Transverse colon (tissue), 4 donors: ENCODE measurements at regions of chr16 and their contacts with region 1.

Region 1: DNA sequence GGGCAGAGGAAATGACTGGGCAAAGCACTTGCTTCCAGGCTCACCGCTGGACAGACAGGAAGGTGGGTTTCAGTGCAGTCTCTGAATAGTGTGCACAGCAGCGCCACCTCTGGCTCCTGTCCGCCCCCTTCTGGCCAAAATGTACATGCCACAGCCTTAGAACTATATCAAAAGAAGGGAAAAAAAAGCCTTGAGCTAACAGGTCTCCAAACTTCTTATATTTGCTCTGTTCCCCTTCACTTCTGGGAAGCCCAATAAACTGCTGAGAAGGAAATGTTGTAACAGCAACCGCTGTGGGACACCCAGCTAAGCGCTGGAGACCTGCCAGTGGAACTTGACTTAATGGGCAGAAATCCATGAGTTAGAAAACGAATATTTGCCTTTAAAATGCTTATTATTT is 17.5 kb downstream of the COG7 start:
- DNase-seq: peak; percentile 73
- H3K4me3 ChIP-seq: no peak overlapping the region
- H3K27ac ChIP-seq: no peak overlapping the region
- H3K4me1 ChIP-seq: peaks cover 6 to 26% (median 17%) of the 10 kb centered on the region in 4 donors
- H3K27me3 ChIP-seq: no peaks in the 10 kb centered on the region
- CTCF ChIP-seq: peak; percentile 78 to 88 (median 86)
- EP300 ChIP-seq: no peak
- POLR2A ChIP-seq: no peak

Region 2: DNA sequence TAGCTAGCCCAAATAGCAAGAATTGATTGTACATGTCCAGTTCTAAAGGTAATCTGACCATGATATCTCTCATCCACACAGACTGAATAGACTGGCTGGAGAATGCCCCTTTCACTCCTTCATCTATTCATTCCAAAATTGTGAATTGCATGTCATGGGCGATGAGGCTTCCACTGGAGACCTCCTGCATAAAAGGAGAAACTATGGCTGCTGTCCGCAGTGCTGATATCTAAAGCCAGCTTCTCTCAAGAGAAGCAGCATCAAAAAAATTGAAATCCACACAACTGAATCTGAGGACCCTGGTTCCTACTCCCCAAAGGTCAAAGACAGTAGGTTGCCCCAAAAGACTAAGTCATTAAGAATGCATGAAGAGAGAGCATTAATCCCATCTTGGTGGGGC is 260.9 kb before region 1 on chr16:
- in situ Hi-C with region 1: loop called in 1 of 4 experiments (anchors 10 kb)
- intact Hi-C with region 1: no loop called
- DNase-seq: no peak
- H3K4me3 ChIP-seq: no peak overlapping the region
- H3K27ac ChIP-seq: no peak overlapping the region
- H3K4me1 ChIP-seq: no peaks in the 10 kb centered on the region
- H3K27me3 ChIP-seq: peaks cover 38% of the 10 kb centered on the region
- CTCF ChIP-seq: no peak
- EP300 ChIP-seq: no peak
- POLR2A ChIP-seq: no peak

Region 3: DNA sequence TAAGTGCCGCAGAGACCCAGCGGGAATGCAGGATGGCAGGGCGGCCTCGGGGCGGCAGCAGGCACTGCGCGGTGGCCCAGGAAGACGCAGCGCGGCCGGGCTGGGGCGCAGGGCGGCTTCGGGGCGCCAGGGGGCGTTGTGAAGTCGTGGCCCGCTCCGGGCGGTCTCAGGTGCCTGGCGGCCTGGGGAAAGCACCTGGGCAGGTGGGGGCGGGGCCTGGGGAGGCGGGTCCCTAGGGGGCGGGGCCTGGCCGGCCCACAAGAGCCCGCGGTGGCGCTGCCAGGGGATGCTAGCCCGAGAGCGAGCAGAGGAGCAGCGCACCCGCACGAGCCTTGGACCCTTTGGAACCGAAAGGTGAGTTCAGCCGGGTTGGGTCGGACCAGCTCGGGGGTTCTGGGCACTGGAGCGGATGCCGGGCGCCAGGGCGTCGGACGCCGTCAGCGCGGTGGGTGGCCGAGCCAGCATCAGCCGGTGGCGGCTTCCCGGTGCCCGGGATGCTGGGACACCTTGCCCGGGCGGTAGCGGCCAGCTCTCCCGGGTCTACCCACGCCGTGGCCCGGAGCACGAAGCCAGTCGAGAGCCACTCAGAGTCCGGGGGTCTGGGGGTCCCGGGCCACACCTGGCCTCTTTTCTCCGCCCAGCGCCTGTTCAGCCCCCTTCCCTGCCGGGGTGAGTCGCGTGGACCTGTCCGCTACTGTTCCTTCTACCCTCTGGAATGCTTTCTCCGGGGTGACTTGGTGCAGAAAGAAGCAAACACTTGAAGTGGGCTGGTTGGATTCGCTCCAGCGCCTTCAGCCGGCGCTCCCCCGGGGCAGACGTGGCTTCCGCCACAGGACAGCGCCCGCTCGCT is 252.8 kb before region 1 on chr16 and contains the start of gene SCNN1G:
- in situ Hi-C with region 1: loop called (anchors 5 to 10 kb)
- intact Hi-C with region 1: loop called (anchors 1 kb)
- DNase-seq: peak; percentile 93
- H3K4me3 ChIP-seq: peak within 1 kb of the TSS; percentile 33 to 61 (median 46)
- H3K27ac ChIP-seq: peak within 1 kb of the TSS in 2 of 4 donors; percentile 20 to 32
- H3K4me1 ChIP-seq: peaks cover 9 to 16% (median 12%) of the 10 kb centered on the region in 4 donors
- H3K27me3 ChIP-seq: peaks cover 79% of the 10 kb centered on the region
- CTCF ChIP-seq: peak; percentile 84 to 99 (median 96)
- EP300 ChIP-seq: no peak
- POLR2A ChIP-seq: peak; percentile 38
- total RNA-seq, gene SCNN1G: 2.8 to 87.8 (median 66.2) TPM

Region 4: DNA sequence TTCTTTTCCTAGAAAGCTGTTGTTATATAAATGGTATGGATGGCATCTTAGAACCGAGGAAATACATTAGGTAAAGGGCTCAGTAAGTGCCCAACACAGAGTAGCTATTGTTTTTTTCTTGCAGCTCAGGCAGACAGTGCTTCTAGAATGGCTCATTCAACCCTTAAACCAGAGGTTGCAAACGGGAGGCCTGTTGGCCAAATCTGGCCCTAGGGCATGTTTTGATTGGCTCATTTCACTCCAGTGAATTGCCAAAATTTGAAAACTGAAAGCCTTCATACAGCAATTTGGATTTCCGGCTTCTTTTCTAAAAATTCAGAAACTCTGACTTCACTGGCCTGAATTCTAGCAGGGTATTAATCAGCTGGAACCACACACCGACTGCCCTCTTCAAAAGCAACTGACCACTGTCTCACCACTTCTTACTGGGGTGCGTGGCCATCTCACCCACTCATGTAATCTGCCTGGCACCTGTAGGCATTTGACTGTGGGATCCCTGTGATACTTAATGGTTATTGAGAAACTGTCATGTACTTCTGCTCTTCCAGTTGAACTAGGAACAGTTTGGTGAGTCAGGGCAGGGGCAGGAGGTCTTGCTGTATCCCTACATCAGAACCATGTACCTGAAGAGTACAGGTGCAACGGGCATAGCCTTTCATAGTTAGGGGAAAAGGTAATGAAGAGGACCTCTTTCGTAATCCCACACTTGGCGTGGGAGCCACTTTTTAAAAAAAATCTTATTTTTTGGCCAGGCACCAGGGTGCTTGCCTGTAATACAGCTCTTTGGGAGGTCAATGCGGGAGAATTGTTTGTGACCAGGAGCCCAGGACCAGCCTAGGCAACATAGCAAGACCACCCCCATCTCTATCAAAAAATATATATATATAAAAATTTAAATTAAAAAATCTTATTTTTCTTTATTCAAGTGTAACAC is 187.0 kb before region 1 on chr16:
- in situ Hi-C with region 1: no loop called
- intact Hi-C with region 1: no loop called
- DNase-seq: no peak
- H3K4me3 ChIP-seq: no peak overlapping the region
- H3K27ac ChIP-seq: no peak overlapping the region
- H3K4me1 ChIP-seq: no peaks in the 10 kb centered on the region
- H3K27me3 ChIP-seq: no peaks in the 10 kb centered on the region
- CTCF ChIP-seq: no peak
- EP300 ChIP-seq: no peak
- POLR2A ChIP-seq: no peak

Region 5: DNA sequence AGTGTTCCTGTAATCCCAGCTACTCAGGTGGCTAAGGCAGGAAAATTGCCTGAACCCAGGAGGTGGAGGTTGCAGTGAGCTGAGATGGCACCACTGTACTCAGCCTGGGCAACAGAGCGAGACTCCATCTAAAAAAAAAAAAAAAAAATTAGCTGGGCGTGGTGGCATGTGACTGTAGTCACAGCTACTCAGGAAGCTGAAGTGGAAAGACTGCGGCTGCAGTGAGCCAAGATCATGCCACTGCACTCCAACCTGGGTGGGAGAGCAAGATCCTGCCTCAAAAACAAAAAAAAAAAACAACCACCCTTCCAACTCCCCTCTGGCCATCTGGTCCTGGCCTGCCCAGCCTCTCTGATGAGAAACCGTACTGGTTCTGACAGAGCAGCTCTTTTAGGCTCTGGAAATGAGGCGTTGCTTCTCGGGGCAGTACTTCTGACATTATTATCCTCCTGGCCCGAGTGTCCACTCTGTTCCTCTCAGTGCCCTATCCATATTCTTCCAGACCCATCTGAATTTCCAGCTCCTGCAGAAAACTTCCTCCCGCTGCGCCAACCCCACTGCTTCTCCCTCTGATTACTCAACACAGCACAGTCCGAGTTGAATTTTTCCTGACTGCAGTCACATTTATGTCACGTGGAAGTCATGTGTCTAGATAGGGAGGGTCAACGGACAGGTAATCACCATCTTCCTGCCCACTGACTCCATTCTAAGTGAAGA is 61.5 kb after region 1 on chr16:
- in situ Hi-C with region 1: no loop called
- intact Hi-C with region 1: no loop called
- DNase-seq: no peak
- H3K4me3 ChIP-seq: no peak overlapping the region
- H3K27ac ChIP-seq: peak overlapping the region in 3 of 4 donors; percentile 20 to 35 (median 31)
- H3K4me1 ChIP-seq: peaks cover 10 to 35% (median 19%) of the 10 kb centered on the region in 4 donors
- H3K27me3 ChIP-seq: no peaks in the 10 kb centered on the region
- CTCF ChIP-seq: no peak
- EP300 ChIP-seq: no peak
- POLR2A ChIP-seq: no peak

Region 6: DNA sequence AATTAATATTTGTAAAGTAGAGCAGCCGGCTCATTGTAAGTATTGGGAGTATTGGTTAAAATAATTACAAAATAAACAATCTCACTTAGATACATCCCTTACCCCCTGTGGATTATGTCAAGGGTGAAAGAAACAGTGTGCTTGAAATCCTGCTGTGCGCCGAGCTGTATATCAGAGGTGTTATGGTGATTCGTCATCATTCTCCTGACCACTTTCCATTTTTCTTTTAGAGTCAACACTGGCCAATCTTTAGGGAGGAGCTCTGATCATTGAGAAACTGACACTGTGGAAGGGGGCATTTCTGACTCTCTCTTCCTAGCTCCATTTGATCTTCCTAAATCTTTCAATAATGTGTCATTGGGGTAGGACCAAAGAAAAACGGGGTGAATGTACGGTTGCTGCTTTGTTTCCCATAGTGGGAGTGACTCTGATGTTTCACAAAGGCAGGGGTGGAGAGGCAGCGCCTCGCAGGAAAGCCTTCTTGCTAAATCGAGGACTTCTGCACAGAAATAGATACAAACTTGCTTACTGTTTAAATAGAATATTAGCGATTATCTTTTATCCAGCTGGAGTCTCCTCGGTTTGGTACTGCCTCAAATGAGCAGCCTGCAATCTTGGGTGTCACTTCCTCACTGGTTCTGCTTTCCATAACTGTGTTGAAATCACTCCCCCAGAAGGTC is 523.7 kb after region 1 on chr16:
- in situ Hi-C with region 1: no loop called
- intact Hi-C with region 1: no loop called
- DNase-seq: no peak
- H3K4me3 ChIP-seq: no peak overlapping the region
- H3K27ac ChIP-seq: no peak overlapping the region
- H3K4me1 ChIP-seq: peaks cover 0 to 7% (median 0%) of the 10 kb centered on the region in 4 donors
- H3K27me3 ChIP-seq: no peaks in the 10 kb centered on the region
- CTCF ChIP-seq: no peak
- EP300 ChIP-seq: no peak
- POLR2A ChIP-seq: no peak